PC-3 (cell line): ENCODE measurements at regions of chr6 and their contacts with region 1.

Region 1: GRCh38 chr6:141562851-141563763 is 569.6 kb upstream of the GJE1 start:
- DNase-seq: peak; percentile 85
- ATAC-seq: peak; percentile 69
- H3K4me3 ChIP-seq: peak overlapping the region; percentile 46
- H3K27ac ChIP-seq: peak overlapping the region; percentile 96
- H3K4me1 ChIP-seq: peaks cover 28% of the 10 kb centered on the region
- H3K27me3 ChIP-seq: no peaks in the 10 kb centered on the region
- CTCF ChIP-seq: peak; percentile 79

Region 2: GRCh38 chr6:140537819-140538705 is 1025.0 kb before region 1 on chr6:
- CTCF ChIA-PET with region 1: no interaction called
- POLR2A ChIA-PET with region 1: no interaction called
- intact Hi-C with region 1: loop called (anchors 10 kb)
- DNase-seq: peak; percentile 77
- ATAC-seq: peak; percentile 100
- H3K4me3 ChIP-seq: peak overlapping the region; percentile 49
- H3K27ac ChIP-seq: peak overlapping the region; percentile 68
- H3K4me1 ChIP-seq: peaks cover 23% of the 10 kb centered on the region
- H3K27me3 ChIP-seq: no peaks in the 10 kb centered on the region
- CTCF ChIP-seq: no peak

Region 3: DNA sequence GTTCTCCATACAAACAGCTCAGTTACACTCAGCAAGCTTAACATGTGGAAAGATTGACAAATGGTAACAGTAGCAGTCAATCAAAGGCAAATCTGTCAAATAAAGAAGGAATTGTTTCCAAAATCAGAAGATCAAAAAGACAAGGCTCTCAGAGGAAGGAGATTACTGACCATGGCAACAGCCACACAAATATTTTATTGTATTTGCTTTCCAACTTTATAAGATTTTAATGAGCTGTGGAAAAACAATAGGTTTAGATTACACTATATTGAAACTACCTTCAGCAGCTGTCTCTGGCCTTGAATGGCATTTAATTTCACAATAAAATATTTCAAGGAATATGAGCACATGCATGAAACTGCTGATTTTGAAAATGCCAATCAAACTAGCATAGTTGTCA is 574.3 kb before region 1 on chr6:
- CTCF ChIA-PET with region 1: no interaction called
- POLR2A ChIA-PET with region 1: interaction called, 4 read pairs
- intact Hi-C with region 1: loop called (anchors 5 kb)
- DNase-seq: peak; percentile 45
- ATAC-seq: peak; percentile 81
- H3K4me3 ChIP-seq: no peak overlapping the region
- H3K27ac ChIP-seq: no peak overlapping the region
- H3K4me1 ChIP-seq: no peaks in the 10 kb centered on the region
- H3K27me3 ChIP-seq: no peaks in the 10 kb centered on the region
- CTCF ChIP-seq: no peak

Region 4: DNA sequence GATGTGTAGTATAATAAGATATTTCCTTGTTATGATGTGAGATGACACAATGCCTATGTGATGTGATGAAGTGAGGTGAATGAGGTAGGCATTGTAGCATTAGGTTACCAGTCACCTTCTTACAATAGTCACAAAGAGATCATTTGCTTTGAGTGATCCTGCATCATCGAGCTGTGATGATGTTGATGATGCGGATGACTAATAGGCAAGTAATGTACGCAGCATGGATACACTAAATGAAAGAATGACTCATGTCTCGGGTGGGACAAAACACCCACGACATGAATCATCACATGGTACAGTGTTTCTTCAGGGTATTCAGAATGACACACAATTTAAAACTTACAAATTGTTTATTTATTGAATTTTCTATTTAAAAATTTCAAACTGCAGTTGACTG is 236.7 kb before region 1 on chr6:
- CTCF ChIA-PET with region 1: no interaction called
- POLR2A ChIA-PET with region 1: no interaction called
- intact Hi-C with region 1: loop called (anchors 1 kb)
- DNase-seq: peak; percentile 95
- ATAC-seq: peak; percentile 96
- H3K4me3 ChIP-seq: peak overlapping the region; percentile 39; the same call in 1 of the 2 replicates
- H3K27ac ChIP-seq: peak overlapping the region; percentile 92
- H3K4me1 ChIP-seq: peaks cover 12% of the 10 kb centered on the region; the same call in 1 of the 2 replicates
- H3K27me3 ChIP-seq: no peaks in the 10 kb centered on the region
- CTCF ChIP-seq: no peak

Region 5: DNA sequence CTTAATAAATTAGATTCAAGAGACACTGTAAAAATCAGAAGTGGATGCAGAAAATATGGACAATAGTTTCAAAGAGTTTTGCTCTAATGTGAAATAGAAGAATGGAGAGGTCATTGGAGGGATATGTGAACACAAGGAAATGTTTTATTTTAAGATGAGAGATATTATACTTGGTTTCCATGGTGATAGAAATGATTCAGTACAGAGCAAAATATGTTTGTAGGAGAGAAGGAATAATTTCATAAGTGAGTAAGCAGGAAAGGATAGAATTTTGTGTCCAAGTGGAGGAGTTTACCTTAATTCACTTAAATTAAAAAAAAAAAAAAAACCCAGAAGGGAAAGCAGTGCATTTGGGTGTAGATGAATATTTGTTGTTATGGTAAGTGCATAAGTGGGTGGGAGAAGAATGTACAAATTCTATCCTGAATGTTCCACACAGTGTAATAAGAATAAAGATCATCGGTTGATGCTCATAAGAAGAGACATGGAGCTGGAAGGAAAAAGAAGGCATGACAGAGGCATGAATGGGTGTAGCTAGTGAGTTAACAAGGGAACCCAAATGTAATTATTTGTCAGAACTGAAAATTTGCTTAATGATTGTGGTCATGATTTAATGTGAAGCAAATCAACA is 119.3 kb before region 1 on chr6:
- CTCF ChIA-PET with region 1: no interaction called
- POLR2A ChIA-PET with region 1: no interaction called
- intact Hi-C with region 1: no loop called
- DNase-seq: no peak
- ATAC-seq: no peak
- H3K4me3 ChIP-seq: no peak overlapping the region
- H3K27ac ChIP-seq: no peak overlapping the region
- H3K4me1 ChIP-seq: no peaks in the 10 kb centered on the region
- H3K27me3 ChIP-seq: no peaks in the 10 kb centered on the region
- CTCF ChIP-seq: no peak